IMR-90 (cell line): ENCODE measurements at regions of chr13 and their contacts with region 1.

Region 1: DNA sequence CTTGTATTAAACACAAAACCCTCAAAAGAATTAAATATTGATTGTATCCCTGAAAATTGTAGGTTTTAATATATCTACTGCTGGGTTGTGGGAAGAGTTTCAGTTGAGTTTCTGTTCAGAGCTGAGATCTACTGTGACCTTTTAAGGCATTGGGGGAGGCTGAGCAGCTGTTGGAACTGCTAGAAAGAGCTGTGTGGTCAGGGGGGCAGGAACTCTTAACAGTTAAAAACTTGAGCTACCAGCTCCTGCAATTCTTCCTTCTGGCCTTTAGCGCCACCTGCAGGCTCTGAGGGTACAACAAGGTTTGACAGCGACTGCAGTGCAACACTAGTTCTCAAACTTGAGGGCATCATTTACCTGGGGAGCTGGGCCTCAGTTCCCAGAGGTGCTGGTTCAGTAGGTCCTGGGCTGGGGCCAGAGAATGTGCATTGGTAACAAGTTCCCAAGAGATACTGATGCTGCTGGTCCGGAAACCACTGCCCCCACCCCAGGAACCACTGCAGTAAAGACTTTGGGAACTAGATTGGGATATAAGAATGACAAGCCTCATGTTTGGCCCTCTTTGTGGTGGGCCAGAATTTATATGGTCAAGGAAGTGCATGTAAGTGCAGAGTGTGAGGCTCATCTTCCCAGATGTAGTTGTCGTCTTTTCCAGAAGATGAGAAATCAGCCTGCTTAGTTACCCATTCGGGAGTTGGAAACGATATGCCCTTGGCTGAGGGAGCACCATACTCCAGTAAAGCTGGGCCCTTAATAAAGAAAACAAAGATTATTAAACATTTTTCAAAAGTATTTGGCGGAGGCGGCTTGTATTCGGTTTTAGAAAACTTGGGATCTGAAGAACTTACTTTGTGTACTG is 2.6 kb downstream of the RNASEH2B start:
- DNase-seq: peak; percentile 90
- ATAC-seq: peak; percentile 34
- H3K4me3 ChIP-seq: no peak overlapping the region
- H3K27ac ChIP-seq: no peak overlapping the region
- H3K4me1 ChIP-seq: peaks cover 14% of the 10 kb centered on the region
- H3K27me3 ChIP-seq: no peaks in the 10 kb centered on the region
- CTCF ChIP-seq: peak; percentile 82
- POLR2A ChIP-seq: no peak
- RAD21 ChIP-seq: peak; percentile 81

Region 2: DNA sequence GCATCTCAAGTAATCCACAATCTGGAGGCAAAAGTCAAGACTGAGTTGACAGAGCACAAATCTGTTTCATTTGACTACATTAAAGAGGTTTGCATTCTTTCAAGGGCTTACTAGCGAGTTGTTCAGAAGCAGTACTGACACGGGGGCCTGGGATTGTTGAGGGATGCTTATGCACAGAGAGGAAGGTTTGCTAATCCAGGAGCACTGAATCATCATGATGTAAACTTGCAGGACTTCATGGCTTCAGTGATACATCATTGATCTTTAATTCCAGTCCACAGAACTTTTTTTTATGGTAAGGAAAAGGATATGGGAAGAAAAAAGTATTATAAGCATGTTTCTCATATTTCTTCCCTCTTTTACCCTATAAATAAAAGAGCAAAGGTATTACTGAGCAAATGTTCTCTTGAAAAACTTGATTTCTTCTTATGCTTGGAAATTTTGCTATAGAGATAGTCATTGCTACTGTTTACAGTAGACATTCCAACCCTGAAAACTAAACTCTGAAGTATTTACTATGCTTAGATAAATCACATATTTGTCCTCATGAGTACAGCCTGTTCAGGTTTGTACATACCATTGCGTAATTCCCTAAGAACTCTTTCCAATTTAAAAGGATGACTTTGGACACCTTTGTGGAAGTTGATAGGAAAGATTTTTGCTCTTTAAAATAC is 1053.8 kb before region 1 on chr13:
- CTCF ChIA-PET with region 1: no interaction called
- POLR2A ChIA-PET with region 1: no interaction called
- dilution Hi-C with region 1: no loop called
- in situ Hi-C with region 1: no loop called
- intact Hi-C with region 1: loop called (anchors 10 kb)
- DNase-seq: peak; percentile 99
- ATAC-seq: peak; percentile 92
- H3K4me3 ChIP-seq: no peak overlapping the region
- H3K27ac ChIP-seq: peak overlapping the region; percentile 92
- H3K4me1 ChIP-seq: peaks cover 6% of the 10 kb centered on the region
- H3K27me3 ChIP-seq: no peaks in the 10 kb centered on the region
- CTCF ChIP-seq: no peak
- POLR2A ChIP-seq: no peak
- RAD21 ChIP-seq: no peak; the same call in 1 of the 2 replicates

Region 3: DNA sequence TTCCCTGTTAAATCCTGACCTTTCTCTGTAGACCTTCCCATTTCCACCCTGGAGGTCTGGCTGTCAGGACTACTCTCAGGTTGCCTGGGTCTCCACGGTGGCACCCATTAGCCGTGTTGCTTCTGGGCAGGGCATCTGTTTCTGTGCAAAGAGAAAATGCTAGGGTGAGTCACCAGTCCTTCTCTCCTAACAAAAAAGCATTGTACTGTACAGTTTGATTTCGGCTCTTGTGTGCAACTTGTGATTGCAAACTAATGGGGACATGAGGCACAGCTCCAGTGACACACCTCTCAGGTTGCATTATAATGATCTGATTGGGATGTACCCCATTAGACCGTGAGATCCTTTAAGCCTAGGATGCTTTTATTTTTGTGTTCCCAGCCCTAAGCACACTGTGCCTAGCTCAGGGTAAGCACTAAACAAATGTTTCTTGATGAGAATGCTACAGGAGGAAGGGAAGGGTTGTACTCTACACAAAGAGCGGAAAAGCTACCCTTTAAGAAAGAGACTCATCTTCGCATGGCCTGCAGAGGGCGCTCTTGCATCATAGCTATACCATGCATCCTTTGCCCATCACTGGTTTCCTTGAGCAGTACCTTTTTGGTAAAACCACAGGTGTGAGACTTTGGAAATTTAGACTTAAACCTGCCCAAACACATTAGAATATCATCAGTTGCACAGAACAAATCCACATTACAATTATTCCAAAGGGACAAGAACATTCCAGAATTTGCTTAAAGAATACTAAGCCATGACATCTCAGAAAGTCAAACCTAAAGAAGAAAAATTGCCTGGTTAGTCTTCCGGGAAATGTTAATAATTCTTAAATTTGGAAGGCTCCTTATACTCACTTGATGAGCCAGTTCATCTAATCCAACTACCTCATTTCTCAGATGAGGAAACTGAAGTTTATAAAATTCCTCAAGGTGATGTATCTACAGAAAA is 935.6 kb before region 1 on chr13:
- CTCF ChIA-PET with region 1: interaction called, 8 read pairs
- POLR2A ChIA-PET with region 1: no interaction called
- dilution Hi-C with region 1: no loop called
- in situ Hi-C with region 1: loop called (anchors 25 kb)
- intact Hi-C with region 1: loop called (anchors 5 kb)
- DNase-seq: peak; percentile 70
- ATAC-seq: peak; percentile 86
- H3K4me3 ChIP-seq: no peak overlapping the region
- H3K27ac ChIP-seq: no peak overlapping the region
- H3K4me1 ChIP-seq: peaks cover 4% of the 10 kb centered on the region
- H3K27me3 ChIP-seq: no peaks in the 10 kb centered on the region
- CTCF ChIP-seq: peak; percentile 86
- POLR2A ChIP-seq: no peak
- RAD21 ChIP-seq: peak; percentile 94

Region 4: DNA sequence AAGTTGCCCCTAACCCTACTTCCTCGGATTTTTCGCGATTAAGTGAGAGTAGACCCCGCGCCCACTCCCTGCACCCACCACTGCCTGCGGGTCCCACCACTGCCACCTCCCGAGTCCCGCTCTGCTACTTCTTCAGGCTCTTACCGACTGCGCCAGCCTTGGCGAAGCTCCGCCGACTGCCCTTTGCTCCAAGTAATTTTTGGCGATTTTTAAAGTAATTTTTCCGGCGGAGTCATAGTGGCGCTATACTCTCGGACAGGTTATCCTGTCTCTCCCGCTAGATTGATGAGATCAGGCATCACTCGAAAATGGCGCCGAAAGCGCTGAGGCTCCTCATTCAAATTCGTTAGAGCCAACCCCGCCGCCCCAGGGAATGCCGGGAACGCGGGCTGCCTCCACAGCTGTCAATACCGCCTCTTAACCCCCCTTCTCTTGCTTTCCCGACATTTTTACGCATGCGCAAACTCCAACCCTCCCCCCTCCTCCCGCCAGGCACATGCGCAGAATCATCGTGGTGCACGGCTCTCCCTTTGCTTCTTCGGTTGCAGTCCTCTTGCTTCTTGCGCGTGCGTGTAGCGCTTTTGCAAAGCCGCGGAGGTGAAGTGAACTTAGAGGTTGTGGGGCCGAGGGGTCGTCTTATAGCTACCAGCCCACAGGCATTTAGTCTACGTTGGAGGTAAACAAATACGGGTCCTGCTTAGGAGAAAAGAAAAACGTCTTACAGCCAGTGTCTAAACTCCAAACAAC is 830.3 kb before region 1 on chr13:
- CTCF ChIA-PET with region 1: interaction called, 7 read pairs
- POLR2A ChIA-PET with region 1: no interaction called
- dilution Hi-C with region 1: no loop called
- in situ Hi-C with region 1: loop called (anchors 25 kb)
- intact Hi-C with region 1: loop called (anchors 1 kb)
- DNase-seq: peak; percentile 98
- ATAC-seq: peak; percentile 85
- H3K4me3 ChIP-seq: peak overlapping the region; percentile 66
- H3K27ac ChIP-seq: peak overlapping the region; percentile 95
- H3K4me1 ChIP-seq: no peaks in the 10 kb centered on the region
- H3K27me3 ChIP-seq: no peaks in the 10 kb centered on the region
- CTCF ChIP-seq: no peak; the same call in 1 of the 2 replicates
- POLR2A ChIP-seq: peak; percentile 62; the same call in 1 of the 2 replicates
- RAD21 ChIP-seq: 0 out of 2 replicates have a peak, but pooled peaks have one; percentile 5

Region 5: DNA sequence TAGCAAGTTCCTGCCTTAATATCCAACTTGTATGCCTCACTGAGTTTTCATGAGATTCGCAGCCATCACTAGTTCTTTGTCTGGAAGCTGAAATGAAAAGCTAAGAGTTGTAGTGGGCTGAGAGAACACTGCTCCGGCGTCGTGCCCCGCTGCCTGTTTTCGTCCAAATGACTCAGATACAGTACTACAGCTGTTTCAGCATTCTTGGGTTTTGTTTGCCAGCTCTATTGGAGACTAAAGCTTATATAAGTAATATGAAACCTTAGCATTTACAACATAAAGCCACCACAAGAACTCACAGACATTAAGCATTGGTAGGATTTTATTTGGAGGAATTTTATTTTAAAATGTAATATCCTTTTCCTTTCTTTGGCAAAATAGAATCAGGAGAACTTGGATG is 368.4 kb before region 1 on chr13:
- CTCF ChIA-PET with region 1: no interaction called
- POLR2A ChIA-PET with region 1: no interaction called
- dilution Hi-C with region 1: no loop called
- in situ Hi-C with region 1: no loop called
- intact Hi-C with region 1: loop called (anchors 5 kb)
- DNase-seq: peak; percentile 91
- ATAC-seq: peak; percentile 99
- H3K4me3 ChIP-seq: no peak overlapping the region
- H3K27ac ChIP-seq: no peak overlapping the region; the same call in 1 of the 2 replicates
- H3K4me1 ChIP-seq: no peaks in the 10 kb centered on the region; the same call in 1 of the 2 replicates
- H3K27me3 ChIP-seq: no peaks in the 10 kb centered on the region; the same call in 1 of the 2 replicates
- CTCF ChIP-seq: no peak
- POLR2A ChIP-seq: no peak
- RAD21 ChIP-seq: no peak

Region 6: DNA sequence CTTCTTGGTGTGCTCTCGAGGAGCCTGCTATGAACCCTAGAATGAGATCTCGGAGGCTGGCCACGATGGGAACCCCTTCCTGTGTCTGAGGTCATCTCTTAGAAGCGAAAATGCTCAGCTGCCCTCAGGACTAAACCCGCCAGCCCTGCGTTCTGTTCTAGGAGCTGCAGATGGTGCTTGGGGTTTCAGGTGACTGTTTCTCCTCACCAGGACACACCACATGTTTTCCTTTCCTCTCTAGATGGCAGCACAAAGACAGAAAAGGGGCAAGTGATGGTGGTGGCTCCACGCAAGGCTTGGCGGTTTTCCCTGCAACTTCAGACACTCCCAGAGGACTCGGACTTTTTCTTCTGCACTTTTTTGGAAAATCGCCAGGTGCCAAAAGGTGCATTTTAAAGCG is 57.5 kb after region 1 on chr13:
- CTCF ChIA-PET with region 1: no interaction called
- POLR2A ChIA-PET with region 1: no interaction called
- dilution Hi-C with region 1: no loop called
- in situ Hi-C with region 1: loop called (anchors 10 kb)
- intact Hi-C with region 1: no loop called
- DNase-seq: no peak
- ATAC-seq: no peak
- H3K4me3 ChIP-seq: no peak overlapping the region
- H3K27ac ChIP-seq: no peak overlapping the region
- H3K4me1 ChIP-seq: no peaks in the 10 kb centered on the region
- H3K27me3 ChIP-seq: no peaks in the 10 kb centered on the region
- CTCF ChIP-seq: no peak
- POLR2A ChIP-seq: no peak
- RAD21 ChIP-seq: no peak